Activated CD4-positive, alpha-beta T cell treated with anti-CD3 and anti-CD28 coated beads, Interleukin-2, amount 10 ng/mL, durations not matched to agents 24 days and 14 days (primary cell): ENCODE measurements at regions of chr12 and their contacts with region 1.

Region 1: GRCh38 chr12:7989827-7990551 is 42.5 kb upstream of the FOXJ2 start:
- DNase-seq: peak; percentile 93
- H3K4me3 Mint-ChIP-seq: peak overlapping the region; percentile 75
- H3K27ac Mint-ChIP-seq: peak overlapping the region; percentile 88
- H3K4me1 Mint-ChIP-seq: peaks cover 37% of the 10 kb centered on the region
- H3K27me3 Mint-ChIP-seq: no peaks in the 10 kb centered on the region

Region 2: DNA sequence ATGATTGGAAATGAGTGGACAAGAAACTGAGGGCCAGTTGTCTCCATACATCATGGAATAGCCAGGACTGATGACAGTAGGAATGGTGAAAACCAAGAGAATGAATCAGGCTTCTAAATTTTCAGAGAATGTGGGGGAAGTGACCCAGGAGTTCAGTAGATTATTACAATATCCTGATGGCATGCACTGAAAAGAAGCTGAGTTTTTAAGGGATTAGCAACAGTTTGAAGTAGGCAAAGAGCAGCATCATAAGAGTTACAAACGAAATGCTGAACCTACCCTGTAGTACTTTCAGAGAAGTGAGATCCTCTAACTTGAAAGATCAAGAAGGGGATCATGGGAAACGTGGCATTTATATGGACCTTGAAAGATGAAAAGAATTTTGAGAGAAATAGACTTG is 130.4 kb before region 1 on chr12:
- intact Hi-C with region 1: loop called (anchors 1 kb)
- DNase-seq: no peak
- H3K4me3 Mint-ChIP-seq: no peak overlapping the region
- H3K27ac Mint-ChIP-seq: no peak overlapping the region
- H3K4me1 Mint-ChIP-seq: peaks cover 10% of the 10 kb centered on the region
- H3K27me3 Mint-ChIP-seq: peaks cover 14% of the 10 kb centered on the region

Region 3: DNA sequence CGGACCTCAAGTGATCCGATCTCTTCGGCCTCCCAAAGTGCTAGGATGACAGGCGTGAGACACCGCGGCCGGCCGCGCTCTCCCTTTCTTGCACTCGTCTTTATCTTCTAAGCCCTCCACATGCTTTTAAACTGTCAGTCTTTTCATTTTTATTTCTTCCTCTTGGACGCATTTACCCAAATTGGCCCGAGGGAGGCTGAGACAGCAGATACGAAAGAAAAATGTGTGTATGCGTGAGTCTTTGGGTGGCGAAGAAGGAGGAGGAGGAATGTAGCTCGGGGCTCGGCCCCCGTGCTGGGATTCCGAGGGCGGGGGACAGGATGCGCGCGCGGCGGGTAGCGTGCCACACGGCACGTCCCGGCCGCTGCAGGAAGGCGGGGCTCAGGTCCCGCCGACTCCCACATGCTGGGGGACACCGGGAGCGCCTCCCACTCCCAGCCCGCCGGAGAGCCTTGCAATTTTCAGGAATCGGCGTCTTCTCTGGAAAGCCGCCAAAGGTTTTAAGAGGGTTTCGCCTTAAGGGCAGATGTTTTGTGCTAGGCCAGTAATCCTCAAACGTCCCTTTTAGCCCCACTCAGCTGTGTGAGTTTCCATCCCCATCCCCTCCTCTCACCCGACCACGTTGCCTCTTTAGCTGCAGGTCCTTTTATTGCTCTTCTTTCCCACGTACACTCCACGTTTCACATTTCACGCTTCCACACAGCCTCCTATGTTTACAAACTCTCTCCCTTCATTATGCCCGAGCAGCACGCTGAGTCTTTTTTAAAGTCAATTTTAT is 19.3 kb before region 1 on chr12:
- intact Hi-C with region 1: loop called (anchors 1 kb)
- DNase-seq: peak; percentile 96
- H3K4me3 Mint-ChIP-seq: peak overlapping the region; percentile 88
- H3K27ac Mint-ChIP-seq: peak overlapping the region; percentile 100
- H3K4me1 Mint-ChIP-seq: peaks cover 33% of the 10 kb centered on the region
- H3K27me3 Mint-ChIP-seq: no peaks in the 10 kb centered on the region

Region 4: DNA sequence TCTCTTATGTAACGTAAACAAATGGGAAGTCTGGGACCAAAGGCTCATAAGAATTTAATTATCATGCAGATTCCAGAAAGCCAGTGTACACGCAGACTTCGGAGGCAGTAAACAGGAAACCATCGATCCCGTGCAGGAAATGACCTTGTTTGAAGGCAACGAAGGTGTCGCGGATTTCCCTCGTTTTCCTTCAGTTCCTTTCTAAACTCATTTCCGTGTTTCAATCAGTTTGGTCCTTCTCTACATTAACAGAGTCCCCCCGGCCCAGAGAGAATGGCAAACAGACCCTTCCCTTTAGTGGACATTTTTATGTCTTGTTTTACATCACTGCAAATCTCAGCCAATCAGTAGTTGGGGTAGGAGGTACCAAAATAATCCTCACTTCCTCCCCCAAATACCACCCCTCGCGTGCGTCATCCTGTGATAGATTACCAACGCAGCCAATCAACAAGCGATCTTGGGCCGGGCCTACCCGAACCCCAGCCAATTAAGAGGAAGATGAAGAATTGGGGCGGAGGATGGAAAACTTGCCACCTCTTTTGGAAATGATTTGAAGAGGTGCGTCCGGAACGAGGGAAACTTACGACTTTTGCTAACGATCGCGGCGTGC is 36.4 kb after region 1 on chr12:
- intact Hi-C with region 1: loop called (anchors 1 kb)
- DNase-seq: peak; percentile 99
- H3K4me3 Mint-ChIP-seq: peak overlapping the region; percentile 91
- H3K27ac Mint-ChIP-seq: peak overlapping the region; percentile 100
- H3K4me1 Mint-ChIP-seq: peaks cover 18% of the 10 kb centered on the region
- H3K27me3 Mint-ChIP-seq: no peaks in the 10 kb centered on the region